CD4-positive, alpha-beta memory T cell (primary cell): ENCODE measurements at regions of chr6 and their contacts with region 1.

Region 1: DNA sequence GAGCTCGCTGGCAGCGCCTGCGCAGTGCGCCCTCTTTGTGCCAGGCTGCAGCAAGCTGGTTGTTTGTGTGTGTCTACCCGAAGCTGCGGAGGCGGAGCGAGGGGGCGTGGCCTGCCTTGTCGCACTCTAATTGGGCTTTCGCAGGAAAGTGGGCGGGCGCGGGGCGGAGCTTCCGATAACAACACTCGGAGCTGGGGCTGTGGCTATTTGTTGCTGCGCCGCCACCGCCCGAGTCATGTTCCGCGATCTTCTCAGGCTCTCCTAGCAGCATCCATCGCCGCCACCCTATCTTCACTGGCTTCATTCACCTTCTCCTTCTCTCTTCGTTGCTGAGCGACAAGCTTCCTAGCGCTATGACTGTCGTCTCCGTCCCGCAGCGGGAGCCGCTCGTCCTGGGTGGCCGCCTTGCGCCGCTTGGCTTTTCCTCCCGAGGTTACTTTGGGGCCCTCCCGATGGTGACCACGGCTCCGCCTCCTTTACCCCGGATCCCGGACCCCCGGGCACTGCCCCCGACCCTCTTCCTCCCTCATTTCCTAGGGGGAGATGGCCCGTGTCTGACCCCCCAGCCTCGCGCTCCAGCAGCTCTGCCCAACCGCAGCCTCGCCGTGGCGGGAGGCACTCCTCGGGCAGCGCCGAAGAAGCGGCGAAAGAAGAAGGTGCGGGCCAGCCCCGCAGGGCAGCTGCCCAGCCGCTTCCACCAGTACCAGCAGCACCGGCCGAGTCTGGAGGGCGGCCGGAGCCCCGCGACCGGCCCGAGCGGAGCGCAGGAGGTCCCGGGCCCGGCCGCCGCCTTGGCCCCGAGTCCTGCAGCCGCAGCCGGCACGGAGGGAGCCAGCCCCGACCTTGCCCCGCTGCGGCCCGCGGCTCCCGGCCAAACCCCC is at the start of gene PNRC1:
- DNase-seq: peak; percentile 99 to 100 (median 100)
- H3K4me3 ChIP-seq: peak within 1 kb of the TSS; percentile 79 to 100
- H3K4me3 Mint-ChIP-seq: peak within 1 kb of the TSS; percentile 91 to 99 (median 94)
- H3K27ac ChIP-seq: peak within 1 kb of the TSS; percentile 99
- H3K27ac Mint-ChIP-seq: peak within 1 kb of the TSS; percentile 96 to 100 (median 99)
- H3K4me1 ChIP-seq: peaks cover 48% of the 10 kb centered on the region
- H3K4me1 Mint-ChIP-seq: peaks cover 26 to 67% (median 39%) of the 10 kb centered on the region in 4 donors
- H3K27me3 ChIP-seq: no peaks in the 10 kb centered on the region
- H3K27me3 Mint-ChIP-seq: peaks cover 0 to 3% of the 10 kb centered on the region in 2 donors
- total RNA-seq, gene PNRC1: 622 to 667 TPM

Region 2: GRCh38 chr6:87701676-87702588 is 1378.8 kb before region 1 on chr6 and contains the start of gene AKIRIN2:
- CTCF ChIA-PET with region 1: no interaction called
- POLR2A ChIA-PET with region 1: interaction called, 11 read pairs
- intact Hi-C with region 1: loop called (anchors 2 kb)
- DNase-seq: peak; percentile 97 to 99 (median 99)
- H3K4me3 ChIP-seq: peak within 1 kb of the TSS; percentile 57 to 91
- H3K4me3 Mint-ChIP-seq: peak within 1 kb of the TSS; percentile 94 to 99 (median 96)
- H3K27ac ChIP-seq: peak within 1 kb of the TSS; percentile 93
- H3K27ac Mint-ChIP-seq: peak within 1 kb of the TSS; percentile 89 to 97 (median 97)
- H3K4me1 ChIP-seq: peaks cover 39% of the 10 kb centered on the region
- H3K4me1 Mint-ChIP-seq: peaks cover 24 to 58% (median 34%) of the 10 kb centered on the region in 4 donors
- H3K27me3 ChIP-seq: no peaks in the 10 kb centered on the region
- H3K27me3 Mint-ChIP-seq: no peaks in the 10 kb centered on the region
- total RNA-seq, gene AKIRIN2: 68.6 to 69.8 TPM

Region 3: GRCh38 chr6:89117211-89118108 is 36.7 kb after region 1 on chr6 and contains the start of gene SRSF12:
- CTCF ChIA-PET with region 1: interaction called, 13 read pairs
- POLR2A ChIA-PET with region 1: interaction called, 14 read pairs
- intact Hi-C with region 1: no loop called
- DNase-seq: peak; percentile 18 to 46 (median 36)
- H3K4me3 ChIP-seq: peak within 1 kb of the TSS in 1 of 2 donors; percentile 58
- H3K4me3 Mint-ChIP-seq: peak within 1 kb of the TSS; percentile 75 to 91 (median 84)
- H3K27ac ChIP-seq: no peak within 1 kb of the TSS
- H3K27ac Mint-ChIP-seq: peak within 1 kb of the TSS in 4 of 7 donors; percentile 1 to 71 (median 34)
- H3K4me1 ChIP-seq: peaks cover 7% of the 10 kb centered on the region
- H3K4me1 Mint-ChIP-seq: peaks cover 6 to 14% (median 11%) of the 10 kb centered on the region in 4 donors
- H3K27me3 ChIP-seq: no peaks in the 10 kb centered on the region
- H3K27me3 Mint-ChIP-seq: no peaks in the 10 kb centered on the region
- total RNA-seq, gene SRSF12: not detected

Region 4: DNA sequence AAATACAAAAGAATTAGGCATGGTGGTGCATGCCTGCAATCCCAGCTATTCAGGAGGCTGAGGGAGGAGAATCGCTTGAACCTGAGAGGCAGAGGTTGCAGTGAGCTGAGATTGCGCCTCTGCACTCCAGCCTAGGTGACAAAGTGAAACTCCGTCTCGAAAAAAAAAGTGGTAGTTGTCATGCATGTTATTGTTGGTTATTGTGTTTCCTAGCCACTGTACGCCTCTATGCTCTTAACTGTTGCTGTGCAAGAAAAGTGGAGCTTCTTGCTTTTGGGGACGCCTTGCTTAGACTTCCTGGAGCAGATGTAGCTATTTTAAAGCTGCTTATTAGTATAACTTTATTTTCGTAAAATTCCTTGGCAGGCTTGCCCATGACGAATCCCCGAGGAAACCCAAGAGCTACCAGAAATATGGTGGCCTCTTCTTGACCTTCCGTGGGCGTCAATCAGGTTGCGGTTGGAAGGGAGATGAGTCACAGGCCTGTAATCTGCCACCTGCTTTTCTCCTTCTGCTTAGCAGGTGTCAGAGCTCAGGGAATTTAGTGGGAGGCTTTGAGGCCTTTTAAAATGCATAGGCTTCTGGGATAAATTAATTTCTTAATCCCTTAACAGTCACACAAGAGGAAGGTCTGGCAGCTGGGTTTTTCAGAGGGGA is 217.0 kb after region 1 on chr6:
- CTCF ChIA-PET with region 1: interaction called, 3 read pairs
- POLR2A ChIA-PET with region 1: interaction called, 37 read pairs
- intact Hi-C with region 1: loop called (anchors 1 kb)
- DNase-seq: peak; percentile 63 to 89 (median 71)
- H3K4me3 ChIP-seq: peak overlapping the region in 1 of 2 donors; percentile 23
- H3K4me3 Mint-ChIP-seq: peak overlapping the region; percentile 42 to 85 (median 78)
- H3K27ac ChIP-seq: peak overlapping the region; percentile 48
- H3K27ac Mint-ChIP-seq: peak overlapping the region; percentile 96 to 99 (median 97)
- H3K4me1 ChIP-seq: peaks cover 29% of the 10 kb centered on the region
- H3K4me1 Mint-ChIP-seq: peaks cover 18 to 37% (median 22%) of the 10 kb centered on the region in 4 donors
- H3K27me3 ChIP-seq: no peaks in the 10 kb centered on the region
- H3K27me3 Mint-ChIP-seq: no peaks in the 10 kb centered on the region

Region 5: GRCh38 chr6:89432875-89433251 is 352.1 kb after region 1 on chr6 and contains the start of gene ANKRD6:
- CTCF ChIA-PET with region 1: interaction called, 4 read pairs
- POLR2A ChIA-PET with region 1: interaction called, 3 read pairs
- intact Hi-C with region 1: loop called (anchors 5 kb)
- DNase-seq: peak; percentile 68 to 86 (median 80)
- H3K4me3 ChIP-seq: peak within 1 kb of the TSS; percentile 39 to 44
- H3K4me3 Mint-ChIP-seq: peak within 1 kb of the TSS; percentile 88 to 93 (median 90)
- H3K27ac ChIP-seq: peak within 1 kb of the TSS; percentile 37
- H3K27ac Mint-ChIP-seq: peak within 1 kb of the TSS; percentile 47 to 90 (median 86)
- H3K4me1 ChIP-seq: peaks cover 10% of the 10 kb centered on the region
- H3K4me1 Mint-ChIP-seq: peaks cover 16 to 34% (median 24%) of the 10 kb centered on the region in 4 donors
- H3K27me3 ChIP-seq: no peaks in the 10 kb centered on the region
- H3K27me3 Mint-ChIP-seq: peaks cover 3 to 4% of the 10 kb centered on the region in 2 donors
- total RNA-seq, gene ANKRD6: 4.4 to 5.8 TPM

Region 6: GRCh38 chr6:90296346-90297114 is 1215.7 kb after region 1 on chr6 and contains the start of gene BACH2:
- CTCF ChIA-PET with region 1: no interaction called
- POLR2A ChIA-PET with region 1: interaction called, 4 read pairs
- intact Hi-C with region 1: loop called (anchors 10 kb)
- DNase-seq: peak; percentile 90 to 96 (median 92)
- H3K4me3 ChIP-seq: peak within 1 kb of the TSS; percentile 43 to 81
- H3K4me3 Mint-ChIP-seq: peak within 1 kb of the TSS; percentile 90 to 96 (median 93)
- H3K27ac ChIP-seq: peak within 1 kb of the TSS; percentile 65
- H3K27ac Mint-ChIP-seq: peak within 1 kb of the TSS; percentile 92 to 99 (median 97)
- H3K4me1 ChIP-seq: peaks cover 40% of the 10 kb centered on the region
- H3K4me1 Mint-ChIP-seq: peaks cover 14 to 40% (median 24%) of the 10 kb centered on the region in 4 donors
- H3K27me3 ChIP-seq: no peaks in the 10 kb centered on the region
- H3K27me3 Mint-ChIP-seq: peaks cover 0 to 4% of the 10 kb centered on the region in 2 donors
- total RNA-seq, gene BACH2: 44.4 to 48.0 TPM